Activated naive CD4-positive, alpha-beta T cell treated with anti-CD3 and anti-CD28 coated beads for 36 hours (primary cell): ENCODE measurements at regions of chr1 and their contacts with region 1.

Region 1: GRCh38 chr1:37595440-37596319 is at the start of gene GNL2:
- DNase-seq: peak; percentile 97
- H3K4me3 Mint-ChIP-seq: peak within 1 kb of the TSS; percentile 99
- H3K27ac Mint-ChIP-seq: peak within 1 kb of the TSS; percentile 90
- H3K4me1 Mint-ChIP-seq: peaks cover 34% of the 10 kb centered on the region
- H3K27me3 Mint-ChIP-seq: no peaks in the 10 kb centered on the region
- total RNA-seq, gene GNL2: 62.2 to 65.3 TPM

Region 2: GRCh38 chr1:37553927-37554808 is 41.5 kb before region 1 on chr1 and contains the start of gene SNIP1:
- CTCF ChIA-PET with region 1: no interaction called
- intact Hi-C with region 1: loop called (anchors 1 kb)
- DNase-seq: peak; percentile 95
- H3K4me3 Mint-ChIP-seq: peak within 1 kb of the TSS; percentile 91
- H3K27ac Mint-ChIP-seq: peak within 1 kb of the TSS; percentile 86
- H3K4me1 Mint-ChIP-seq: peaks cover 44% of the 10 kb centered on the region
- H3K27me3 Mint-ChIP-seq: no peaks in the 10 kb centered on the region
- total RNA-seq, gene SNIP1: 14.3 to 15.3 TPM

Region 3: DNA sequence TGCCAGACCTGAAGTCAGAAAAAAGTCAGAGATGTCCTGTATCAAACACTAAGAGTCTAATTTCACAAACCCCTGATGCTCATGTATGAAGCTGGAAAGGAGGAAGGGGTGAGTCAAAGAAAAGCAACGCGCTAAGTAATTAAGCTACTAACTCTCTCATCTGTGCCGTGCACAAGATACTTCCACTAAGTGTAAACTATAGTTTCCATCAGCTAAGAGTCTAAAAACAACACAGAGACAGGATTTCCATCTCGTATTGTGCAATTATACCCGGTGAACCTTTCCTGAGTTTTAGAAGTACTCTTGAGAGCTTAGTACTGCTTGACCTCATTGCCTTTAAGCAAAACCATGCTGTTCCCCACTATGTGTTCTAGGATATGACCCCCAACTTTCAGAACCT is 20.0 kb before region 1 on chr1:
- CTCF ChIA-PET with region 1: interaction called, 3 read pairs
- intact Hi-C with region 1: loop called (anchors 2 kb)
- DNase-seq: no peak
- H3K4me3 Mint-ChIP-seq: no peak overlapping the region
- H3K27ac Mint-ChIP-seq: peak overlapping the region; percentile 51
- H3K4me1 Mint-ChIP-seq: peaks cover 47% of the 10 kb centered on the region
- H3K27me3 Mint-ChIP-seq: no peaks in the 10 kb centered on the region

Region 4: DNA sequence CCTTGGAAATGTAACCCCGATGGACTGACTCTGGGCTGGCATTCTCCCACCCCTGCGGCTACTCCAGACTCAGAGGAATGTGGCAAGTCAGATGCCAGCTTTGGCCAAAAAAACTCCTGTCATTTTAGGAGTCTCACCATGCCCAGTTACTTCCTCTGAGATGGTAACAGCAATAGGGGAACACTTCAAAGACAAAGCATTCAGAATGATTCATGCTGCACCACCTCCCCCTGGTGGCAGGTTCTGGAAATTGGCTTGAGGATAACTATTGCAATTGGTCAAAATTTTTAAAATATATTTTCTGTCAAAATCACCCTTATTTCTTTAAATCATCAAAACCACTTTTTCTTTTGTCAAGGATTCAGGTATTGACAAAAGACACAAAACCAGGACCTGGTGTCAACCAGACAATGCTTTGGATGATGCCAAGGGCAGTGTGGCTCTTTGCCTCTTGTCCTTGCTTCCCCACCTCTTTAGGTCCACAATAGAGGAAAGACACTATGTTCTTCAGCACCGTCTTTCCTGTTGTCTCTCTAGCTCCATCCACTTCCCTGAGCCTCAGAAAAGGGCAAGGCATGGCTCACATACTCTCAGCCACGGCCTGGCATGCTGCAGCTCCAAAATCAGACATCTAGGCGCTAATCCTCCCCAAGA is 86.8 kb after region 1 on chr1:
- CTCF ChIA-PET with region 1: interaction called, 85 read pairs
- intact Hi-C with region 1: loop called (anchors 2 kb)
- DNase-seq: peak; percentile 91
- H3K4me3 Mint-ChIP-seq: no peak overlapping the region
- H3K27ac Mint-ChIP-seq: no peak overlapping the region
- H3K4me1 Mint-ChIP-seq: peaks cover 3% of the 10 kb centered on the region
- H3K27me3 Mint-ChIP-seq: no peaks in the 10 kb centered on the region

Region 5: DNA sequence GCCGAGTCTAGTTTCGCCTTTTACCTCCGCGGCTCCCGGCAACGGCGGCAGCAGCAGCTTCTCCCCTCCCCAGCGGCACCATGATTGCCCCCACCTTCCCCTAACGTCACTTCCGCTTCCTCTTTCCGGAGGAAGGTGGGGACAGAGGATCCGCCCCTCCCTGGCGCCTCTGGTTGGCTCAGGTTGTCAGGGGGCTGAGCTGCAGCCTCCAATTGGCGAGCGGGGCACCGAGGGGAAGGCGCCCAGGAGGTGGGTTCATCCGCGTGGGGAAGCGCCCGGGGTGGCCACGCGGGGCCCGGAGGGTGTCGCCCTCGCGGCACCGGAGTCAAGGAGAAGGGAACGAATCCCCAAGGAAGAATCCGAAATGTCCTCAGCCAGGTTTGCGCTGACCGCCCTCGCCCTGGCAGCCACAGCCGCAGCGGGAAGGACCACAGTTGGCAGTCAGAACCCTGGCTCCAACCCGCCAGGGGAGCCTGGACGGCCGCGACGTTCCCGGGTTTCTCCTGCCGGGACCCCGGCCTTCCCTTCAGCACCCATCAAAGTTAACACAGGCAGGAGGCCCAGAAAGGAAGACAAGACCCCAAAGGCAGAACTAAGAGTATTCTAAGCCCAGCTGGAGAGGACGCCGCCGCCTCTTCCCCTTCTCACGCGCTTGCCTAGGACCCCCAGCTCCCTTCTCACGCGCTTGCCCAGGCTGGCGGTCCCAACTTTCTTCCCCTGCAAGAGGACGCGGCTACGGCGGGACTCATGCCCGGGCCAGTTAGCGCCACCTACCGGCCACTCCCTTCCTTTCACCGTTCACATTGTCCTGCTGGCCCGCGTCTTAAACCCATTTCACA is 264.0 kb after region 1 on chr1 and contains the start of gene MTF1:
- CTCF ChIA-PET with region 1: no interaction called
- intact Hi-C with region 1: loop called (anchors 1 kb)
- DNase-seq: peak; percentile 98
- H3K4me3 Mint-ChIP-seq: peak within 1 kb of the TSS; percentile 92
- H3K27ac Mint-ChIP-seq: peak within 1 kb of the TSS; percentile 84
- H3K4me1 Mint-ChIP-seq: peaks cover 39% of the 10 kb centered on the region
- H3K27me3 Mint-ChIP-seq: no peaks in the 10 kb centered on the region
- total RNA-seq, gene MTF1: 18.9 to 19.1 TPM

Region 6: GRCh38 chr1:38005195-38006007 is 409.7 kb after region 1 on chr1 and contains the start of gene FHL3:
- CTCF ChIA-PET with region 1: no interaction called
- intact Hi-C with region 1: loop called (anchors 10 kb)
- DNase-seq: peak; percentile 37
- H3K4me3 Mint-ChIP-seq: peak within 1 kb of the TSS; percentile 86
- H3K27ac Mint-ChIP-seq: peak within 1 kb of the TSS; percentile 76
- H3K4me1 Mint-ChIP-seq: peaks cover 38% of the 10 kb centered on the region
- H3K27me3 Mint-ChIP-seq: no peaks in the 10 kb centered on the region
- total RNA-seq, gene FHL3: 12.1 to 12.7 TPM

Region 7: DNA sequence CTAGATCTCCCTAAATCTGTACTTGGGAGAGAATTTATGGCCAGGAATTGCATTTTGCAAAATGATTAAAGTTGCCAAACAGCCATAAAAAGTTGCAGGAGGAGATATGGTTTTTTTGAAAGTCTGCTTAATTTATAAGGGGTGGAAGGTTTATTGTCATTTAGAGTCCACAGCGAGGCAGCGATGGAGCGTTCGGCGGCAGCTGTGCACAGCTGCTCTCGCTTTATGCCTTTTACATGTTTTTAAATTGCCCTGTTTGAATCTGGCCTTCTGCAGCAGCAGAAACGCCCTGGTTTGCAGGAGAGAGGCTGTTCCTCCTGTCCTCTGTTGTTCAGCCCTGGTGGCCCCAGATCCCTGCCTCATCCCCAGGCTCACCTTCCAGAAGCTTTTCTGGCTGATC is 595.8 kb after region 1 on chr1:
- CTCF ChIA-PET with region 1: no interaction called
- intact Hi-C with region 1: no loop called
- DNase-seq: no peak
- H3K4me3 Mint-ChIP-seq: no peak overlapping the region
- H3K27ac Mint-ChIP-seq: no peak overlapping the region
- H3K4me1 Mint-ChIP-seq: no peaks in the 10 kb centered on the region
- H3K27me3 Mint-ChIP-seq: peaks cover 17% of the 10 kb centered on the region